HepG2 (cell line): ENCODE measurements at regions of chrX and their contacts with region 1.

Region 1: GRCh38 chrX:16826207-16826606 is 39.9 kb downstream of the TXLNG start:
- DNase-seq: peak; percentile 78
- ATAC-seq: peak; percentile 81
- H3K4me3 ChIP-seq: no peak overlapping the region
- H3K27ac ChIP-seq: peak overlapping the region; percentile 52
- H3K4me1 ChIP-seq: peaks cover 20% of the 10 kb centered on the region
- H3K27me3 ChIP-seq: no peaks in the 10 kb centered on the region
- CTCF ChIP-seq: peak; percentile 69
- EP300 ChIP-seq: no peak
- POLR2A ChIP-seq: no peak
- RAD21 ChIP-seq: no peak

Region 2: DNA sequence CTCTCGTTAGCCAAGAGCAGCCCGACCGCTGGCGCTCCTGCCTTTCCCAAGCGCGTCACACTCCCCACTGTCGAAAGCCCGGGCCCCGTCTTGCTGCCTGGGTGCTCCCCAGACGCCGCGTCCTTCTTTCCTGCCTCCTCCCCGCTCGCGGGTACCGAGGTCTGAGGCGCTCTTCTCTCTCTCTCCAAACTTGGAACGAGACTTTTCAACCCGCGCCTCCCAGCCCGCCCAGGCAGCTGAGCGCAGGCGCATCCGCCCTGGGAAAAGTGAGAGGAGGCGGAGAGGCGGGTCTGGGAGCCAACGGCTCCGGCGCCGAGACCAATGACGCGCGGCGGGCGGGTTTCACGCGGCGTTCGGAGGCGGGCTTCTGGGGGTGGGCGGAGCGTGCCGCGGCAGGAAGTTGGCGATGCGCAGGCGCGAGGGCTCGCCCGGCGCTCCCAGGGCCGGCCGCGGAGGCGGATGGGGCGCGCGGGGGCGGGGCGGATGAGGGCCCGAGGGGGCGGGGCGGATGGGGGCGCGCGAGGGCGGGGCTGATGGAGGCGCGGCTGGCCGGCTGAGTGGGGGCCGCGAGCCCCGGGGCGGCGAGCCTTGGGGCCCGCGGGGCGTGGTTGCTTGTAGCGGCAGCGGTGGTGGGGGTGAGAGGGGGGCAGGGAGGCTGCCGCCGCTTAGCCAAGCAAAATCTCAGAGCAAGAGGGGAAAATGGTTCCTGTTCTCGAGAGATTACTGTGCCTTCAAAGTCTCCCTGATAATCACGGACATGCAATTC is 44.1 kb after region 1 on chrX and contains the start of gene RBBP7:
- CTCF ChIA-PET with region 1: no interaction called
- POLR2A ChIA-PET with region 1: no interaction called
- in situ Hi-C with region 1: no loop called
- intact Hi-C with region 1: loop called (anchors 5 kb)
- DNase-seq: peak; percentile 78
- ATAC-seq: peak; percentile 82
- H3K4me3 ChIP-seq: peak within 1 kb of the TSS; percentile 70 to 76 (median 72)
- H3K27ac ChIP-seq: peak within 1 kb of the TSS; percentile 97
- H3K4me1 ChIP-seq: peaks cover 33% of the 10 kb centered on the region; the same call in 1 of the 2 replicates
- H3K27me3 ChIP-seq: no peaks in the 10 kb centered on the region; a peak in 1 of 5 replicates
- CTCF ChIP-seq: no peak
- EP300 ChIP-seq: no peak
- POLR2A ChIP-seq: peak; percentile 63 to 73
- RAD21 ChIP-seq: 0 out of 2 replicates have a peak, but pooled peaks have one; percentile 20
- total RNA-seq, gene RBBP7: 145 and 193 TPM in 2 replicates

Region 3: GRCh38 chrX:16892504-16893362 is 66.5 kb after region 1 on chrX:
- CTCF ChIA-PET with region 1: no interaction called
- POLR2A ChIA-PET with region 1: no interaction called
- in situ Hi-C with region 1: no loop called
- intact Hi-C with region 1: loop called (anchors 2 kb)
- DNase-seq: peak; percentile 50
- ATAC-seq: peak; percentile 74
- H3K4me3 ChIP-seq: no peak overlapping the region
- H3K27ac ChIP-seq: no peak overlapping the region
- H3K4me1 ChIP-seq: no peaks in the 10 kb centered on the region
- H3K27me3 ChIP-seq: no peaks in the 10 kb centered on the region
- CTCF ChIP-seq: peak; percentile 74
- EP300 ChIP-seq: no peak
- POLR2A ChIP-seq: no peak
- RAD21 ChIP-seq: no peak